Left cardiac atrium (tissue), 4 donors: ENCODE measurements at regions of chr2 and their contacts with region 1.

Region 1: GRCh38 chr2:178914259-178914849 is 107.1 kb upstream of the TTN start:
- DNase-seq: peak; percentile 88
- ATAC-seq: peak; percentile 91 to 93

Region 2: GRCh38 chr2:178796079-178796677 is 118.2 kb before region 1 on chr2:
- intact Hi-C with region 1: loop called in 1 of 2 experiments (anchors 2 kb)
- DNase-seq: no peak
- ATAC-seq: no peak